Activated T-helper 1 cell treated with anti-CD3 and anti-CD28 coated beads, Interleukin-12 subunit alpha, Interleukin-12 subunit beta, Interleukin-2, Interleukin-4 antibody, amounts not matched to agents 30 ng/mL and 10 ng/mL and 1 ng/mL, durations not matched to agents 14 hours and 24 hours and 36 hours (primary cell): ENCODE measurements at regions of chr9 and their contacts with region 1.

Region 1: DNA sequence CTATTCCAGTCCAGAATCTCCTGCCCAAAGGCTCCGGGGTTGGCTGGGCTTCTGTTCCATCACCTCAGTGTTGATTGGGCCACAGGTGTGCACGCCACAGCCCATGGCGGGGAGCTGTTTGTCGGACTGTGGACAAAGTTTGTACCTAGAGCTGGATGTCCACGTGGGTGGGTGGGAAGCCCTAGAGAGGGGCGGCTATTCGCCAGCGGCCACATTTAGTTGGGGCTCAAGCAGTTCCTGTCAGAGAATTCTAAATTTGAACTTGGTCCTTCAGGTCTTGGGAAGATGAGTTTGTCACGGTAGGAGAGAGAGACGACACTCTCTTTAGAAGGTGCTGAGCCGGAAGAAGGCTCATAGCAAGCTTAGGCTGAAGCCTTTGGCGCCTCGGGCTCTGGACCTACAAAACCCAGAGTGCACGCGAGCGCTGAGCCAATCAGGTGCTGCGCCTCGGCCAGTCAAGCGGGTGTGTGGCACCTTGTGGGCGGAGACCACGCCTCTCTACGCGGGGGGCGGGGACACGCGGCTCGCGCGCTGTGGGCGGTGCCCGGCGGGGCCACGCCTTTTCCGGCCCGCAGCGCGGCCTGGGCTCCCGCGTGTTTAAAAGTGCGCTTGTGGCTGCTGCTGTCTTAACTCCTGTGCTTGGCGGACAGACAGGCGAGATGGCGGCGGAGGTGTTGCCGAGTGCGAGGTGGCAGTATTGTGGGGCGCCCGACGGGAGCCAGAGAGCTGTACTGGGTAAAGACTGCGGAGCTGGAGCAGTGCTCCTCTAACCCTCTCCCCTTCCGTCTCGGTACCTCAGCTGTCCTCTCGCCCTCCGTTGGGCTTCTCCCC is at the start of gene POLR1E:
- DNase-seq: peak; percentile 95
- H3K4me3 Mint-ChIP-seq: peak within 1 kb of the TSS; percentile 96
- H3K27ac Mint-ChIP-seq: peak within 1 kb of the TSS; percentile 92
- H3K4me1 Mint-ChIP-seq: peaks cover 31% of the 10 kb centered on the region
- H3K27me3 Mint-ChIP-seq: peaks cover 8% of the 10 kb centered on the region
- total RNA-seq, gene POLR1E: 59.8 and 61.0 TPM in 2 replicates

Region 2: GRCh38 chr9:36995927-36996705 is 489.5 kb before region 1 on chr9:
- intact Hi-C with region 1: no loop called
- DNase-seq: peak; percentile 17
- H3K4me3 Mint-ChIP-seq: peak overlapping the region; percentile 40
- H3K27ac Mint-ChIP-seq: no peak overlapping the region
- H3K4me1 Mint-ChIP-seq: no peaks in the 10 kb centered on the region
- H3K27me3 Mint-ChIP-seq: peaks cover 21% of the 10 kb centered on the region

Region 3: GRCh38 chr9:37415011-37415719 is 70.4 kb before region 1 on chr9:
- intact Hi-C with region 1: loop called (anchors 2 kb)
- DNase-seq: peak; percentile 69
- H3K4me3 Mint-ChIP-seq: peak overlapping the region; percentile 23
- H3K27ac Mint-ChIP-seq: no peak overlapping the region
- H3K4me1 Mint-ChIP-seq: peaks cover 12% of the 10 kb centered on the region
- H3K27me3 Mint-ChIP-seq: peaks cover 4% of the 10 kb centered on the region

Region 4: GRCh38 chr9:37453827-37454226 is 31.8 kb before region 1 on chr9:
- intact Hi-C with region 1: no loop called
- DNase-seq: no peak
- H3K4me3 Mint-ChIP-seq: no peak overlapping the region
- H3K27ac Mint-ChIP-seq: no peak overlapping the region
- H3K4me1 Mint-ChIP-seq: peaks cover 23% of the 10 kb centered on the region
- H3K27me3 Mint-ChIP-seq: no peaks in the 10 kb centered on the region

Region 5: GRCh38 chr9:37753489-37754190 is 268.0 kb after region 1 on chr9 and contains the start of gene TRMT10B:
- intact Hi-C with region 1: loop called (anchors 2 kb)
- DNase-seq: peak; percentile 65
- H3K4me3 Mint-ChIP-seq: peak within 1 kb of the TSS; percentile 95
- H3K27ac Mint-ChIP-seq: peak within 1 kb of the TSS; percentile 82
- H3K4me1 Mint-ChIP-seq: peaks cover 27% of the 10 kb centered on the region
- H3K27me3 Mint-ChIP-seq: no peaks in the 10 kb centered on the region
- total RNA-seq, gene TRMT10B: 10.0 and 11.8 TPM in 2 replicates

Region 6: DNA sequence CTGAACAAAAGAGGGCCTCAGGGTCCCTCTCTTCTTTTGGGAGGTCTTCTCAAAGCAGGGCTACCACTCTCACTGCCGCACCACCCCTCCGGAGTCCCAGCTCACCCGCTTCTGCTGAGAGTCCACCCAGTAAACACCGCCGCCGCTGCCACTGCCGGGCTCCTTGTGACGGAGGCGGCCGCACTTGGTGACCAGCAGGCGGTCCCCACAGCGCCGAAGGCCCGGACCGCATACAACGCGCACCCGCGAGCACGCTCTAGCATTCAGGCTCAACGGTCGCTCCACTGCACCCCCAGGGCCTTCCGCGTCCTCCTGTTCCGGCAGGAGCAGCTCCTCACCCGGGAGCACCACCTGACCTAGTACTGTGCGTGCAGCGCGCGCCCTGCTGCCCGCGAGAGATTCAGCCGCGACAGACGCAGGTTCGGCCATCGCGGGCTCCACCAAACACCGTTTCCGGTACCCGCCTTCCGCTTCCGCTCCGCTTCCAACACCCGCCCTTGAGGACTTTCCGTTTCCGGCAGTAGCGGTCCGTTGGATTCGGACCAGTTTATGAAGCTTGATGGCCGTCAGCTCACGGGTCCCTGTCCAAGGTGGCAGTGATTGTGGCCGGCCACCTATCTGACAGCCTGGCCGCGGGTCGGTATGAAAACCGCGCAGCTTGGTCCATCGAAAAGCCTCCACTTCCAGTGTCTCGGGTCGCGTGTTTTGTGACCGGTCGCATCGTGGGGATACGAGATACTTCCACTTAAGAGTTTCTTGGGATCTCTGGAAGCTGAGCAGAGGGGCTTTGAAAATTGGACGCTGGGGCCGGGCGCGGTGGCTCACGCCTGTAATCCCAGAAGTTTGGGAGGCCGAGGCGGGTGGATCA is 299.2 kb after region 1 on chr9 and contains the start of gene EXOSC3:
- intact Hi-C with region 1: loop called (anchors 10 kb)
- DNase-seq: peak; percentile 85
- H3K4me3 Mint-ChIP-seq: peak within 1 kb of the TSS; percentile 99
- H3K27ac Mint-ChIP-seq: peak within 1 kb of the TSS; percentile 97
- H3K4me1 Mint-ChIP-seq: peaks cover 40% of the 10 kb centered on the region
- H3K27me3 Mint-ChIP-seq: no peaks in the 10 kb centered on the region
- total RNA-seq, gene EXOSC3: 94.8 and 116 TPM in 2 replicates

Region 7: DNA sequence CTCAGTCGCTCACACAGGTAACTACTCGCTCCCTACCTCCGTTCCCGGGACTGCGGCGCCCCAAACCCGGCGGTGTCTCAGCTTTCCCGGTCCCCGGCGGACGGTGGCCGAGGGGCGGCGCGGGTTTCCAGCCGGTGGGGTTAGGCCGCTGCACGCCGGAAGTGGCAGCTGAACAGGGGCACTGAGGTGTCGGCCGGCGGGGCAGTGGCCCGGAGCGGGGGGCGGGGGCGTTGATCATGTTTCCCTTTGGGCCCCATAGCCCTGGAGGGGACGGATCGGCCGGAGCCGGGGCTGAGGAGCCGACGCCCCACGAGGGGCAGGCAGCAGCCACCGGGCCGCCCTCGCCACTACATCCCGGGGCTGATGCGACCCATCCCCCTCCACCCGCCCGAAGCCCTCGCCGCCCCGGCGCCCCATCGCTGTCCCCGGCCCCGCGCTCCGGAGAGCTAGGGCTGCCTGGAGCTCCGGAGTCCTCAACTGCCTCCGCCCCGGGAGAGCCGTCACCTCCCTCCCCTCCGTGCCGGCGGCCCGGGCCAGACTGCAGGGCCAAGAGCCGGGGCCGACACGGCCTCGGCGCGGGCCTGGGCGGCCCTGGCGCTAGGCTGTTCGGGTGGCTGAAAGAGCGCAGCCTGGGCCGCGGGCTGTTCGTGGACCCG is 315.2 kb after region 1 on chr9 and contains the start of gene DCAF10:
- intact Hi-C with region 1: loop called (anchors 5 kb)
- DNase-seq: peak; percentile 88
- H3K4me3 Mint-ChIP-seq: peak within 1 kb of the TSS; percentile 90
- H3K27ac Mint-ChIP-seq: peak within 1 kb of the TSS; percentile 80
- H3K4me1 Mint-ChIP-seq: peaks cover 39% of the 10 kb centered on the region
- H3K27me3 Mint-ChIP-seq: no peaks in the 10 kb centered on the region
- total RNA-seq, gene DCAF10: 18.5 and 19.4 TPM in 2 replicates